PC-3 (cell line): ENCODE measurements at regions of chr5 and their contacts with region 1.

Region 1: GRCh38 chr5:95554647-95555548 is at the starts of genes ARSK and SKIC3:
- DNase-seq: peak; percentile 99
- ATAC-seq: peak; percentile 89
- H3K4me3 ChIP-seq: peak within 1 kb of the TSS; percentile 78
- H3K27ac ChIP-seq: peak within 1 kb of the TSS; percentile 74
- H3K4me1 ChIP-seq: peaks cover 9% of the 10 kb centered on the region
- H3K27me3 ChIP-seq: no peaks in the 10 kb centered on the region
- CTCF ChIP-seq: 0 out of 2 replicates have a peak, but pooled peaks have one; percentile 36
- total RNA-seq, gene ARSK: 10.5 and 12.6 TPM in 2 replicates
- total RNA-seq, gene SKIC3: 27.8 and 37.6 TPM in 2 replicates

Region 2: DNA sequence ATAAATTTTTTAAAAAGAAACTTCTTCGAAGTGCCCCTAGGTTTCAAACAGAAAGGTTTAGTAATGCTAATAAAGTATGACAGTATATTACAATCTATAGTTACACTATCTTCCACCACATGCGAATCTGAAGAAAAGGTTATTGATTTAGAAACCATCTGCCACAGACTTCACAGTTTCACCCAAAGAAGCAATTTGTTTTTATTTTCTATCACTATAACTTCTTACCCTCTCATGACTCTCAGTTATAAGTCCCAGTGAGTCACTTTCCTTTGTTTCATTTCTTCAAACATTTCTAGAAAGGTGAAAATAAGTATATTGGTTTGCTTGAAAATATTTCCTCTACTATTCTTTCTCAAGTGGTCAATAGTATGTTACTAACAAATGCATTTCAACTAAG is 363.6 kb before region 1 on chr5:
- CTCF ChIA-PET with region 1: no interaction called
- POLR2A ChIA-PET with region 1: no interaction called
- intact Hi-C with region 1: no loop called
- DNase-seq: no peak
- ATAC-seq: no peak
- H3K4me3 ChIP-seq: no peak overlapping the region
- H3K27ac ChIP-seq: no peak overlapping the region
- H3K4me1 ChIP-seq: no peaks in the 10 kb centered on the region
- H3K27me3 ChIP-seq: no peaks in the 10 kb centered on the region
- CTCF ChIP-seq: no peak

Region 3: DNA sequence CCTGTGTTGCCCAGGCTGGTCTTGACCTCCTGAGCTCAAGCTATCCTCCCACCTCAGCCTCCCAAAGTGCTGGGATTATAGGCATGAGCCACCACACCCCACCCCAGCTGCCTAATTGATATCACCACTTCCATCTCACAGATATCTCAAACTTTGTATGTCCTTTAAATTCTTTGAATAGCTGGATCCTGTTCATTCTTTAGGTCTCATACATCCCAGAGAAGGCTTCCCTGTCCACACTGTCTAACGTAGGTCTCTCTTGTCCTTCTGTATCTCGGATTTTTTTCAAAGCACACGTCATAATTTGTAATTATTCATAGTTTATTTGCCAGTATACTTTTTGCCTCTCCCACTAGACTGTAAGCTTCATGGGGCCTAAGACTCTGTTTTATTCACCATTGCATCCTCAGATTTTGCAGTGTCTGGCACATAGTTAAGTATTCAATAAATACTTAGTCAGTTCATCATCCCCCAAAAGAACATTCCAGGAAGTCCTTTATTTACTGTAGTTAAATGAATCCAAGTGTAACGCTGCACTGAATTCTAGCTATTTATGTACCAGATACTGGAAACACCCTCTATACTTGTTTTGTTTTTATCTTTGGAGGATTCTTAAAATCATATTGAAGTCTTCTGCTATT is 10.5 kb after region 1 on chr5:
- CTCF ChIA-PET with region 1: no interaction called
- POLR2A ChIA-PET with region 1: no interaction called
- intact Hi-C with region 1: loop called (anchors 1 kb)
- DNase-seq: peak; percentile 43
- ATAC-seq: peak; percentile 96
- H3K4me3 ChIP-seq: no peak overlapping the region
- H3K27ac ChIP-seq: no peak overlapping the region
- H3K4me1 ChIP-seq: 0 out of 2 replicates have a peak, but pooled peaks cover 7% of the 10 kb centered on the region
- H3K27me3 ChIP-seq: no peaks in the 10 kb centered on the region
- CTCF ChIP-seq: no peak

Region 4: GRCh38 chr5:95591490-95591901 is 36.6 kb after region 1 on chr5:
- CTCF ChIA-PET with region 1: no interaction called
- POLR2A ChIA-PET with region 1: no interaction called
- intact Hi-C with region 1: loop called (anchors 2 kb)
- DNase-seq: peak; percentile 90
- ATAC-seq: peak; percentile 98
- H3K4me3 ChIP-seq: no peak overlapping the region
- H3K27ac ChIP-seq: peak overlapping the region; percentile 81
- H3K4me1 ChIP-seq: peaks cover 28% of the 10 kb centered on the region
- H3K27me3 ChIP-seq: no peaks in the 10 kb centered on the region
- CTCF ChIP-seq: no peak

Region 5: GRCh38 chr5:95646554-95647431 is 91.9 kb after region 1 on chr5 and contains the start of gene RFESD:
- CTCF ChIA-PET with region 1: interaction called, 4 read pairs
- POLR2A ChIA-PET with region 1: no interaction called
- intact Hi-C with region 1: loop called (anchors 1 kb)
- DNase-seq: peak; percentile 98
- ATAC-seq: peak; percentile 95
- H3K4me3 ChIP-seq: peak within 1 kb of the TSS; percentile 74
- H3K27ac ChIP-seq: peak within 1 kb of the TSS; percentile 64
- H3K4me1 ChIP-seq: peaks cover 12% of the 10 kb centered on the region
- H3K27me3 ChIP-seq: no peaks in the 10 kb centered on the region
- CTCF ChIP-seq: peak; percentile 22; the same call in 1 of the 2 replicates
- total RNA-seq, gene RFESD: 0.36 and 2.4 TPM in 2 replicates

Region 6: DNA sequence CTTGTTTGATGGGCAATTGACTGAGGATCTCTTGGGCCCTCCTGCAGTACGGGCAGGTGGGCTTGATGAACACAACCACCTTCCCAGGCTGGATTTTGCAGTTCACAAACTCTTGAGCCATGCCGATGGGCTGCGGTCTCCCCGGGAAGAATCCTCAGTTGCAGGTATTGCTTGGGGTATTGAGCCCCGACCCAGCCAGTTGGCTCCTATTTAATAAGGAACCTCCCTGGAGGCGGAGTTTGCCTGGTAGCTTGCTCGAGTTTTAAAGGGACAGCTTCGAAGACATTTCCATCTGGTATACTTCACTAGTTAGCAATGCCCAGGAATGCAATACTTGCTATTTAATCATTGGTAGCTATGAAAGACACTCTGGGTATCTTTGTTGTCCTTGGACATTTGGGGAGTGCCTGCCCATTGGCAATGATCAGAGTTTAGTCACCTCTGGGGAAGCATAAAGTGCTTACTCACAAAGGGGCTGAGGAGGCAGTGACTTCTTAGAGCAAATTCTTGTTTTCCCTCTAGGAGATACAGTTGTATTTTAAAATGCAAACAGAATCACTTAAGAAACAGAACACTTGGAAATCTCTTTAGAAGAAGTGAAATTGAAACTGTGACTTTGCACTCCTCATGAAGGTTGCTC is 267.8 kb after region 1 on chr5 and contains the start of gene GLRX:
- CTCF ChIA-PET with region 1: no interaction called
- POLR2A ChIA-PET with region 1: interaction called, 4 read pairs
- intact Hi-C with region 1: loop called (anchors 10 kb)
- DNase-seq: peak; percentile 91
- ATAC-seq: peak; percentile 70
- H3K4me3 ChIP-seq: peak within 1 kb of the TSS; percentile 73
- H3K27ac ChIP-seq: peak within 1 kb of the TSS; percentile 96
- H3K4me1 ChIP-seq: peaks cover 34% of the 10 kb centered on the region
- H3K27me3 ChIP-seq: no peaks in the 10 kb centered on the region
- CTCF ChIP-seq: no peak
- total RNA-seq, gene GLRX: 24.6 and 27.4 TPM in 2 replicates

Region 7: DNA sequence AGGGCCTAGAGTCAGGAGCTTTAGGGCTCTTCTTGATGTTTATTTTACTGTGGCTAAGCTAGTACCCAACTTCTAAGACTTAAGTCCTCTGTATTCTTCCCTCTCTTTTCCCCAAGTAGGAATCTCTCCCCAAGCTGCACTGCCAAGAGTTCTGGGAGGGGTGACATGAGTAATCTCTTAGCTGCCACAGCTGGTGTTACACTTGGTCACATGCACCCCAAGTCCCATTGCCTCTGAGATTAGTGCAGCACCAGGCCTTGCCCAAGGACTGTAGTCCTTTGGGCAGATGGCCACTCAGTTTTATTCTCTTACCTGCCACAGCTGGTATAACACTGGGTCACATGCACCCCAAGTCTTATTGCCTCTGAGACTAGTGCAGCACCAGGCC is 1742.8 kb after region 1 on chr5:
- CTCF ChIA-PET with region 1: no interaction called
- POLR2A ChIA-PET with region 1: no interaction called
- intact Hi-C with region 1: no loop called
- DNase-seq: no peak
- ATAC-seq: no peak
- H3K4me3 ChIP-seq: no peak overlapping the region
- H3K27ac ChIP-seq: no peak overlapping the region
- H3K4me1 ChIP-seq: no peaks in the 10 kb centered on the region
- H3K27me3 ChIP-seq: no peaks in the 10 kb centered on the region
- CTCF ChIP-seq: no peak